HEK293T (cell line): ENCODE measurements at regions of chr10 and their contacts with region 1.

Region 1: GRCh38 chr10:94403380-94404213 is 1.3 kb downstream of the TBC1D12 start:
- DNase-seq: peak; percentile 56

Region 2: DNA sequence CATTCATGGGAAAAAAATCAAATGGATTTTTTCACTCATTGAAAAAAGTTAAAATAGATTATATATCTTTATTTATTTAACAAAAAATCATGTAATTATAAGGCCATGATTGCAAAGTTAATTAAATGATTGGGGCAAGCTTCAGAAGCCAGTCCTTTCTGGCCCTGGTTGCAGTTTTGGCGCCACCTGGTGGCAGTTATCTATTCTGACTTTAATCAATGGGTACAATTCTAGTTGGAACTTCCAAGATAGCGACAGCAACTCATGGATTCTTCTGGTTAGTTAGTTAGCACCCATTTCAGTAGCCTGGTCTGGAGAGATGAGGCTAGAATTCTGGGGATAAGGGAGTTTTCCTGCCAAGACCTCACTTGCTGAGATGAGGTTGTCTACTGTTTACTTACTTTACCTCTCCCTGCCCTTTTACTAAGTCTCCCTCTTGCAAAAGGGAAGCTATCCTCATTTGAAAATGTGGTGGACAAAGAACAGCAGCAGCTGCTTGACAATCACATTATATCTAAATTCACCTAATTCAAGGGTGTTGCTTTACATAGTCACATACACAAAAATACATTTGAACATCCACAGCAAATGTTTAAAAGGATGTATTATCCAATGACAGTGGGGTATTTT is 83.2 kb before region 1 on chr10:
- CTCF ChIA-PET with region 1: no interaction called
- POLR2A ChIA-PET with region 1: no interaction called
- DNase-seq: peak; percentile 69

Region 3: DNA sequence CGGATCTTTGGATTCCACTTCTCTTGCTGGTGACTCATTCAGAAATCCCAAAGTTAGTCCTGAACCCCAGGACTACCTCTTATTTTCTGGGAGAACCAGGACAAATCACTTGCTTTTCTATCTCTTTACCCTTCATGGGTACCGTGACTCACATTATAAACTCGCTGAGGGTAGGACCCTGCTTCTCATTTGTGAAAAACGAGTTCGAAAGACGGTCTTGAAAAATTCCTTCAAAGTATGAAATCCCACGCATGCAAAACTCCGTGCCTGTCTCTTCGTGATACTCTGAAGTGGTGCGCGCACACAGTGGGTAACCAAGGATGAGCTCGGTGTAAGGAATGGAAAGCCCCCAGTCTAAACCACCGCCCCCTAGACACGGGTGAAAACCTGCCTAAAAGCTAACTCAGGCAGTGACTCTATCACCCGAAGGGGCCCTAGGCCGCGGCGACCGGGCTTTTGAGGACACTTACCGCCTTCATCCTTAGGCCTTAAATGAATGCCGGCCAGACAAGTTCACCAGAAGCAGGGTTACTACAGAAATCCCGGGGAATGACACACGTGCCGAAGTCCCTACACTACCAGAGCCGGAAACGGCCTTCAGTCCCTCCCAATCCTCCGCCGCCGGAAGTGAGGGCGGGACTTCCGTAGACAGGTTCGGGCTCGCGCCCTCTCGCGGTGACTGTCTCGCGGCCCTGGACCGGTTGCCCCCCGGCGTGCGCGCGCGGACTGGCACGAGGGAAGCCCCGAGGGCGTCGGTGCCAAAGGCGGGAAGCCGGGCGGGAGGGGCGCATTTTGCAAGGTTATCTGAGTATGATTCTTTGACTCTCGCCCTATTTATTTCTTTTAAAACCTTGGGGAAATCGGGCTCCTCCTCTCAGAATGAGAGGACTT is 41.0 kb before region 1 on chr10 and contains the start of gene NOC3L:
- CTCF ChIA-PET with region 1: interaction called, 6 read pairs
- POLR2A ChIA-PET with region 1: interaction called, 10 read pairs
- DNase-seq: peak; percentile 98